Mammary epithelial cell (primary cell): ENCODE measurements at regions of chr3 and their contacts with region 1.

Region 1: DNA sequence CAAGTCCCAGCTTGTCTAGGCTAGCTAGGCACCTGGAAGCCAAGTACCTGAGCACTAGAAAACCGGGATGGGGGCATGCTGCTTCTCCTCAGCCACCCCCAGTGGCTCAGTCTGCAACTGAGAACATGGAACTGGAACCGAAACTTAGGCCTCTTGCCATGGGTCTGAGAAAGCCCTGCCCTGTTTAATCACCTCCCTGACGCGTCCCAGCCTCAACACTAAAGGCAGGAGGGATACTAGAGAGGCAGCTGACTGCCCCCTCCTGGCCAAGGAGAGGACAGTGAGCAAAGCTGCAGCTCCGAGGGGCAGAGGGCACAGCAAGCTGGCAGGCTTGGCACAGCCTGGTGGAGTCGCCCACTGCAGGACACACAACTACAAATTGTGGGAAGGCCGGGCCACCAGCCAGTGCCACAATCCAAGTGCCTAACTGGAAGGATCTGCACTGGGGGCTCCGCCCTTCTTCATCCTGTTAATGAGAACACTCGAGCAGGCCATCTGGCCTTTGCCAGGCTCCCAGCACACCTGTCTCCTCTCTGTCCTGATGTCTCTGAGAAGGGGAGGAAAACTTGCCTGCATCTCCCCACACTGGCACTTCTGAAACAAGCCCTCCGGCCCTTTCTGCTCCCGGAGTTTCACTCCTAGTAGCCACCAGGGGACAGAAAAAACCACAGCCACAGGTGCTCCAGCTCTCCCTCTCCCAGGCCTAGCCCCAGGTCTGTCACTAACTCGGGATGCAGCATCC is 53.7 kb downstream of the BDH1 start:
- DNase-seq: peak; percentile 89
- H3K4me3 ChIP-seq: peak overlapping the region in 1 of 3 experiments; percentile 7
- H3K27ac ChIP-seq: peak overlapping the region; percentile 60
- H3K4me1 ChIP-seq: peaks cover 30% of the 10 kb centered on the region
- H3K27me3 ChIP-seq: no peaks in the 10 kb centered on the region
- CTCF ChIP-seq: peak; percentile 89 to 91

Region 2: GRCh38 chr3:196988241-196989029 is 513.6 kb before region 1 on chr3:
- CTCF ChIA-PET with region 1: no interaction called
- dilution Hi-C with region 1: no loop called
- in situ Hi-C with region 1: loop called (anchors 10 to 25 kb)
- intact Hi-C with region 1: no loop called
- DNase-seq: no peak
- H3K4me3 ChIP-seq: no peak overlapping the region
- H3K27ac ChIP-seq: no peak overlapping the region
- H3K4me1 ChIP-seq: no peaks in the 10 kb centered on the region
- H3K27me3 ChIP-seq: no peaks in the 10 kb centered on the region
- CTCF ChIP-seq: no peak

Region 3: GRCh38 chr3:197224034-197224444 is 278.0 kb before region 1 on chr3:
- CTCF ChIA-PET with region 1: no interaction called
- dilution Hi-C with region 1: no loop called
- in situ Hi-C with region 1: no loop called
- intact Hi-C with region 1: loop called (anchors 1 kb)
- DNase-seq: peak; percentile 37
- H3K4me3 ChIP-seq: no peak overlapping the region
- H3K27ac ChIP-seq: no peak overlapping the region
- H3K4me1 ChIP-seq: peaks cover 10% of the 10 kb centered on the region
- H3K27me3 ChIP-seq: no peaks in the 10 kb centered on the region
- CTCF ChIP-seq: peak; percentile 46 to 63

Region 4: GRCh38 chr3:197298341-197298857 is 203.7 kb before region 1 on chr3 and contains the start of gene DLG1:
- CTCF ChIA-PET with region 1: interaction called, 6 read pairs
- dilution Hi-C with region 1: no loop called
- in situ Hi-C with region 1: no loop called
- intact Hi-C with region 1: loop called (anchors 1 kb)
- DNase-seq: peak; percentile 95
- H3K4me3 ChIP-seq: peak within 1 kb of the TSS; percentile 78 to 96 (median 89)
- H3K27ac ChIP-seq: peak within 1 kb of the TSS; percentile 86
- H3K4me1 ChIP-seq: peaks cover 34% of the 10 kb centered on the region
- H3K27me3 ChIP-seq: no peaks in the 10 kb centered on the region
- CTCF ChIP-seq: no peak
- total RNA-seq, gene DLG1: 115 to 157 TPM

Region 5: DNA sequence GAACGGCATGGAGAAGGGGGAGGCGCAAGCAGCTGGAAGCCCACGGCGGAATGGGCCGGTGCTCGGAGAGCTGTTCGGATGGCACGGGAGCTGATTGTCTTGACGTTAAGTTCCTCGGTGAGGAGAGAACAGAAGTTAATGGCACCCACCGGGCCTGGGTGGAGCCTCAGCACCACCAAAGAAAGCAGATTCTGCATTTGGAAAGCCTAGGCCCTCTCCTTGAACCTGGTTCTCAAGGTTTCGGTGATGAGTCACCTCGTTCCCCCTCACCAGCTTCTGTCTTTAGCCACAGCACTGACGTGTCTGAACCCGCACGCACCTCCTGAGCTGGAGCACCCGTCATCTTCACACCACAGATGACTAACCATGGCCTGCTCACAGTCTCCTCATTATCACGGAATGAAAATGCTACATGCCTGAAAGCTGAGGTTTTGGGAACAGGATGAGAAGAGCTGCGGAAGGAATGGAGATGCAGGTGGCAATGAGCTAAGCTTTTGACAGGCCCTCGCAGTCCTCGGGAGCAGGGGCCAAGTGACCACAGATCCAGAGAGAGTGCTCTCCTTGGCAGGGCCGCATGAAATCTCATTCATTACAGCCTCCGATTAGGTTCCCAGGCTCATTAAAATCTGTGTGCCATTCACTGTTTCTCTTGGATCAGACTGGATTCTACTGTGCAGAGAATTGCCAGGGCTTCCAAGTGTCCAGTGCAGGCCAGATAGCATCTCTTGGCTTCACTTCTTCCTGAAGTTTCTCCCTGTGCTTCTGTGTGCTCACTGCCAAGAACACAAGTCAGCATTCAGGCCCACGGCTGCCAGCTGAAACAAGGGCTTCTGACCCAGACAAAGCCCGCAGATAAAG is 107.4 kb before region 1 on chr3:
- CTCF ChIA-PET with region 1: no interaction called
- dilution Hi-C with region 1: no loop called
- in situ Hi-C with region 1: no loop called
- intact Hi-C with region 1: loop called (anchors 1 kb)
- DNase-seq: peak; percentile 100
- H3K4me3 ChIP-seq: no peak overlapping the region
- H3K27ac ChIP-seq: peak overlapping the region; percentile 88
- H3K4me1 ChIP-seq: peaks cover 27% of the 10 kb centered on the region
- H3K27me3 ChIP-seq: no peaks in the 10 kb centered on the region
- CTCF ChIP-seq: no peak

Region 6: GRCh38 chr3:197428117-197428801 is 73.8 kb before region 1 on chr3:
- CTCF ChIA-PET with region 1: no interaction called
- dilution Hi-C with region 1: no loop called
- in situ Hi-C with region 1: no loop called
- intact Hi-C with region 1: no loop called
- DNase-seq: peak; percentile 25
- H3K4me3 ChIP-seq: no peak overlapping the region
- H3K27ac ChIP-seq: no peak overlapping the region
- H3K4me1 ChIP-seq: no peaks in the 10 kb centered on the region
- H3K27me3 ChIP-seq: no peaks in the 10 kb centered on the region
- CTCF ChIP-seq: no peak

Region 7: DNA sequence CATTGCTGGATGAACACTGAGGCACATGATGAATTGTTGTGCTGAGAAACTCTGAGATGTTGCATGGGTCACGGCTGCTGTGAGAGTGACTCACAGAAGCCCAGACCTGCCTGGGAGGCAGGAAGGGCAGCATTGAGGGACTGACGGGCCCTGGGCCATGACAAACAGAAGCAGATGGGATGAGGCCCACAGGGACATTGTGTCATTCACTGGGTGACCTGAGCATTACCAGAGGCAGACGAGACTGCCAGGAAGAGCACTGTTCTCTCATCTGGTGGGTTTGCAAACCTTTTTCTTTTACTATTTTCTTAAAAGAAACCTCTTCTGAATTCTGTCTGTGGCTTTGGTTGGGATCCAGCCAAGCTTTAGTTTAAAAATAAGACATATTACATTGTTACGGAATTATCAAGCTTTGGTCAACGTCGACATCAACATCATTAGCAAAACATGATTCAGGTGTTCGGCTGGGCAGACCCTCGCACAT is 14.1 kb before region 1 on chr3:
- CTCF ChIA-PET with region 1: no interaction called
- dilution Hi-C with region 1: no loop called
- in situ Hi-C with region 1: no loop called
- intact Hi-C with region 1: loop called (anchors 1 kb)
- DNase-seq: peak; percentile 94
- H3K4me3 ChIP-seq: no peak overlapping the region
- H3K27ac ChIP-seq: peak overlapping the region; percentile 72
- H3K4me1 ChIP-seq: peaks cover 47% of the 10 kb centered on the region
- H3K27me3 ChIP-seq: no peaks in the 10 kb centered on the region
- CTCF ChIP-seq: no peak